AG04450 (cell line): ENCODE measurements at regions of chr11 and their contacts with region 1.

Region 1: GRCh38 chr11:37630866-37631265 is 1032.8 kb upstream of the RAG2 start:
- DNase-seq: no peak
- H3K4me3 ChIP-seq: no peak overlapping the region
- H3K27ac ChIP-seq: no peak overlapping the region
- H3K27me3 ChIP-seq: no peaks in the 10 kb centered on the region
- CTCF ChIP-seq: no peak

Region 2: GRCh38 chr11:37115963-37116362 is 514.9 kb before region 1 on chr11:
- CTCF ChIA-PET with region 1: no interaction called
- POLR2A ChIA-PET with region 1: no interaction called
- DNase-seq: no peak
- H3K4me3 ChIP-seq: no peak overlapping the region
- H3K27ac ChIP-seq: no peak overlapping the region
- H3K27me3 ChIP-seq: no peaks in the 10 kb centered on the region
- CTCF ChIP-seq: no peak

Region 3: DNA sequence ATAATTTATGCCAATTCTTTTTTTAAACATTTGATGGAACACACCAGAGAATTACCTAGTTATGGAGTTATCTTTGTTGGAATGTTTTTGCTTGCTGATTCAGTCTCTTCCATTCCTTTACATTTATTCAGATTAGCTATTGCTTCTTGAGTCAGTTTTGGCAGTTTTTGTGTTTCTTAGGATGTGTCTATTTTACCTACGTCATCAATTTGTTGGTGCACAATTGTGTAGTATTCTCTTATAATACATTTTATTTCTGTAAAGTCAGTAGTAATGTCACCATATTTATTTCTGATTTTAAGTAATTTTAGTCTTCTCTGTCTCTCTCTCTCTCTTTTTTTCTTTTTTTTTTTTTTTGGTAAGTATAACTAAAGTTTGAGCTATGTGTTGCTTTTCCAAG is 103.3 kb before region 1 on chr11:
- CTCF ChIA-PET with region 1: interaction called, 11 read pairs
- POLR2A ChIA-PET with region 1: no interaction called
- DNase-seq: no peak
- H3K4me3 ChIP-seq: no peak overlapping the region
- H3K27ac ChIP-seq: no peak overlapping the region
- H3K27me3 ChIP-seq: no peaks in the 10 kb centered on the region
- CTCF ChIP-seq: no peak

Region 4: DNA sequence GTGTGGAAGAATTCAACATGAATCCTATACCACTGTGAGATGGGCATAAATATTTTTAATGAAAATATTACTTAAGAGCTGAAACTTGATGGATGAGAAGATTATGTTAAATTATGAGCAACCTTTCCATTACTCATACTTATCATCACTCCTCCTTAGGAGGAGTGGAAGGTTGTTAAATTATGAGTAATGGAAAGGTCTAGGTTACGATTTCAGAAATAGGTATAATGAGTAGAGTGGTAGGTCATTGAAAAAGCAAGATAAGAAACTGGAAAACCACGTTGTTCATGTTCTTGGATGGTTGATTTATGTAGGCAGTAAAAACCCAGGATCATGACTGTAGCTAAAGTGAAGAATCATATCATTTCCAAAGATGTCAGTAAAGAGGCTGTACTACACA is 59.6 kb before region 1 on chr11:
- CTCF ChIA-PET with region 1: no interaction called
- POLR2A ChIA-PET with region 1: no interaction called
- DNase-seq: no peak
- H3K4me3 ChIP-seq: no peak overlapping the region
- H3K27ac ChIP-seq: no peak overlapping the region
- H3K27me3 ChIP-seq: no peaks in the 10 kb centered on the region
- CTCF ChIP-seq: no peak